T-cell (primary cell): ENCODE measurements at regions of chr12 and their contacts with region 1.

Region 1: GRCh38 chr12:74732826-74733225 is 195.2 kb downstream of the ATXN7L3B start:
- DNase-seq: no peak
- ATAC-seq: no peak
- H3K4me3 ChIP-seq: no peak overlapping the region
- H3K4me3 Mint-ChIP-seq: no peak overlapping the region
- H3K27ac ChIP-seq: no peak overlapping the region
- H3K27ac Mint-ChIP-seq: no peak overlapping the region
- H3K4me1 ChIP-seq: no peaks in the 10 kb centered on the region
- H3K4me1 Mint-ChIP-seq: peaks cover 0 to 2% (median 0%) of the 10 kb centered on the region in 3 donors
- H3K27me3 ChIP-seq: no peaks in the 10 kb centered on the region
- H3K27me3 Mint-ChIP-seq: no peaks in the 10 kb centered on the region

Region 2: DNA sequence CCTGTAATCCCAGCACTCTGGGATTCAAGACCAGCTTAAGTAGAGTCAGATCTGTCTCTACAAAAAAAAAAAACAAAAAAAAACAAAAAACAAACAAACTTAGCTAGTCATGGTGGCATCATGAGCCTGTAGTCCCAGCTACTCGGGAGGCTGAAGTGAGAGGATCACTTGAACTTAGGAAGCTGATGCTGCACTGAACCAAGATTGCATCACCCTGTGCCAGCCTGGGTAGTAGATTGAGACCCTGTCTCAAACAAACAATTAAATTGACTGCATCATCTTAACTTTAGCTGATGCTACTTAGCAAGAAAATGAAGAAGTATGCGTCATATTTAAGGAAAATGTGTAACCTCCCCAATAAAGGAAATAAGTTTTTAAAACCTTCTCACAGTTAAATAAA is 331.8 kb before region 1 on chr12:
- CTCF ChIA-PET with region 1: no interaction called
- POLR2A ChIA-PET with region 1: no interaction called
- DNase-seq: no peak
- ATAC-seq: no peak
- H3K4me3 ChIP-seq: no peak overlapping the region
- H3K4me3 Mint-ChIP-seq: no peak overlapping the region
- H3K27ac ChIP-seq: no peak overlapping the region
- H3K27ac Mint-ChIP-seq: no peak overlapping the region
- H3K4me1 ChIP-seq: no peaks in the 10 kb centered on the region
- H3K4me1 Mint-ChIP-seq: no peaks in the 10 kb centered on the region
- H3K27me3 ChIP-seq: no peaks in the 10 kb centered on the region
- H3K27me3 Mint-ChIP-seq: no peaks in the 10 kb centered on the region

Region 3: GRCh38 chr12:74719447-74719846 is 13.4 kb before region 1 on chr12:
- CTCF ChIA-PET with region 1: interaction called in 1 of 2 experiments, 12 read pairs
- POLR2A ChIA-PET with region 1: no interaction called
- DNase-seq: no peak
- ATAC-seq: no peak
- H3K4me3 ChIP-seq: no peak overlapping the region
- H3K4me3 Mint-ChIP-seq: no peak overlapping the region
- H3K27ac ChIP-seq: no peak overlapping the region
- H3K27ac Mint-ChIP-seq: no peak overlapping the region
- H3K4me1 ChIP-seq: no peaks in the 10 kb centered on the region
- H3K4me1 Mint-ChIP-seq: no peaks in the 10 kb centered on the region
- H3K27me3 ChIP-seq: no peaks in the 10 kb centered on the region
- H3K27me3 Mint-ChIP-seq: no peaks in the 10 kb centered on the region

Region 4: DNA sequence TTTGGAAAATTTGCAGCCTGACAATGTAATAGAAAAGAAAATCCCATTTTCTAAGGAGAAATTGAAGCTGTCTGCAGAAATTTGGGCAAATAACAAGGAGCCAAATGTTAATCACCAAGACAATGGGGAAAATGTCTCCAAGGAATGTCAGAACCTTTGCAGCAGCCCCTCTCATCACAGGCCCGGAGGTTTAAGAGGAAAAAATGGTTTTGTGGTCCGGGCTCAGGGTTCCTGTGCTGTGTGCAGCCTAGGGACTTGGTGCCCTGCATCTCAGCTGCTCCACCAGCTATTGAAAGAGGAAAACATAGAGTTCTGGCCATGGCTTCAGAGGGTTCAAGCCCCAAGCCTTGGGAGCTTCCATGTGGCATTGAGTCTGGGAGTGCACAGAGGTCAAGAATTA is 103.7 kb after region 1 on chr12:
- CTCF ChIA-PET with region 1: no interaction called
- POLR2A ChIA-PET with region 1: no interaction called
- DNase-seq: no peak
- ATAC-seq: no peak
- H3K4me3 ChIP-seq: no peak overlapping the region
- H3K4me3 Mint-ChIP-seq: no peak overlapping the region
- H3K27ac ChIP-seq: no peak overlapping the region
- H3K27ac Mint-ChIP-seq: no peak overlapping the region
- H3K4me1 ChIP-seq: no peaks in the 10 kb centered on the region
- H3K4me1 Mint-ChIP-seq: no peaks in the 10 kb centered on the region
- H3K27me3 ChIP-seq: no peaks in the 10 kb centered on the region
- H3K27me3 Mint-ChIP-seq: no peaks in the 10 kb centered on the region

Region 5: DNA sequence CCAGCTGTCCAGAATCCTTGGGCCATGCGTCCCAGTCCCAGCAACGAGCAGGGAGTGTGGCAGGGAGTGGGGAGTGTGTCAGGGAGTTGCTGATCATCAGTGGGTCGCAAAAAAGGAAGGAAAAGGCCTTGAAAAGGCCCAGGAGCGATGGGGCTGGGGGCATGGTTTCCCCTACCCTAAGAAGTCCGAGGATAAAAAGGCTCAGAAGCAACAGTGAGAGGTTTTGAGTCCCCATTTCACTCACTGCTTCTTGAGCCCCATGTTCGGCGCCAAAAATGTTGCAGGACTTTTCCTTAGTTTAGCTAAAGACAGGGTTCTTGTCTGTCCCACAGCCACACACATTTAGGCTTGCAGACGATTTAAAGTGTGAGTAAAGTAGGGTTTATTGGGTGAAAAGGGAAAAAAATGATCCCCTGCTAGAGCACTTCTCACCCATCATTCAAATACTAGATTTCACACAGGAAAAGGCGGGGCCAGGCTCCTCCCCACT is 287.3 kb after region 1 on chr12:
- CTCF ChIA-PET with region 1: no interaction called
- POLR2A ChIA-PET with region 1: no interaction called
- DNase-seq: no peak
- ATAC-seq: no peak
- H3K4me3 ChIP-seq: no peak overlapping the region
- H3K4me3 Mint-ChIP-seq: no peak overlapping the region
- H3K27ac ChIP-seq: no peak overlapping the region
- H3K27ac Mint-ChIP-seq: no peak overlapping the region
- H3K4me1 ChIP-seq: no peaks in the 10 kb centered on the region
- H3K4me1 Mint-ChIP-seq: no peaks in the 10 kb centered on the region
- H3K27me3 ChIP-seq: no peaks in the 10 kb centered on the region
- H3K27me3 Mint-ChIP-seq: no peaks in the 10 kb centered on the region